CD8-positive, alpha-beta T cell (primary cell): ENCODE measurements at regions of chr6 and their contacts with region 1.

Region 1: GRCh38 chr6:112311950-112312547 is 35.1 kb upstream of the RFPL4B start:
- DNase-seq: peak in 3 of 9 experiments; percentile 5 to 50 (median 45)
- ATAC-seq: peak; percentile 52
- H3K4me3 ChIP-seq: no peak overlapping the region
- H3K4me3 Mint-ChIP-seq: no peak overlapping the region
- H3K27ac ChIP-seq: no peak overlapping the region
- H3K27ac Mint-ChIP-seq: no peak overlapping the region
- H3K4me1 ChIP-seq: no peaks in the 10 kb centered on the region
- H3K4me1 Mint-ChIP-seq: no peaks in the 10 kb centered on the region
- H3K27me3 ChIP-seq: no peaks in the 10 kb centered on the region
- H3K27me3 Mint-ChIP-seq: peaks cover 16% of the 10 kb centered on the region
- CTCF ChIP-seq: peak; percentile 69

Region 2: GRCh38 chr6:111011360-111012142 is 1300.5 kb before region 1 on chr6:
- CTCF ChIA-PET with region 1: no interaction called
- POLR2A ChIA-PET with region 1: no interaction called
- intact Hi-C with region 1: loop called in 1 of 2 experiments (anchors 5 kb)
- DNase-seq: peak in 2 of 9 experiments; percentile 45 to 62
- ATAC-seq: peak; percentile 69
- H3K4me3 ChIP-seq: no peak overlapping the region
- H3K4me3 Mint-ChIP-seq: no peak overlapping the region
- H3K27ac ChIP-seq: no peak overlapping the region
- H3K27ac Mint-ChIP-seq: no peak overlapping the region
- H3K4me1 ChIP-seq: no peaks in the 10 kb centered on the region
- H3K4me1 Mint-ChIP-seq: peaks cover 4% of the 10 kb centered on the region
- H3K27me3 ChIP-seq: no peaks in the 10 kb centered on the region
- H3K27me3 Mint-ChIP-seq: no peaks in the 10 kb centered on the region
- CTCF ChIP-seq: peak; percentile 71

Region 3: DNA sequence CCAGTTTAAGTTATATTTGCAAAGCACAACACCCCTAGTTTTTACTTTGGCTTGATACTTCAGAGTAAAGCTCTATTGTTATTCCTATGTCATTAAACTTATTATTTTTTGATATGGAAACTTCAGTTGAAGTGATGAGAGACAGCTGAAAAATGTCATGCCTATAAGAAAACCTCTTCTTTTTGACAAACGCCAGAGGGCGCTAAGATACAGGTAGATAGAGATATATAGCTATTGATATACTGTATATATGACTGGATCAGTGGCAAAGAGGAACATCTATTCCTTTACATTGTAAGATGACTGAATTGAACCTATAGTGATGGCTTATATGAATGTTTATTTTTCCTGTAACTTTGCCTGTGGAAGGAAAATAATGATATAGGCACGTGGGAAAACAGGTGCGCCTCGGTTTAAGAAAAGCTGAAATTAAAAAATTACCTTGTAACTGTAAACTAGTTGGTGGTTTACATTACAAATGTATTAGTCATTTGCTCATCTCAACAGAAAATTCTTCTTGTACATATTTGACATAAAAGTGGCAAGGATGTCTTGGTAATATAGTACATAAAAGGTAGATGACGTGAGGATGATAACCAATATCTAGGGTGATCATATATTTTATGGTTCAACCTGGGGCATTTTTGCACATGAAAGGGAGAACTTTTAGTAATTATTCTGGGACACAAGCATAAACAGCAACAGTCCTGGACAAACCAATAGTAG is 131.8 kb before region 1 on chr6:
- CTCF ChIA-PET with region 1: interaction called, 49 read pairs
- POLR2A ChIA-PET with region 1: interaction called, 5 read pairs
- intact Hi-C with region 1: loop called in 1 of 2 experiments (anchors 1 kb)
- DNase-seq: peak in 7 of 9 experiments; percentile 17 to 88 (median 52)
- ATAC-seq: peak; percentile 58
- H3K4me3 ChIP-seq: no peak overlapping the region
- H3K4me3 Mint-ChIP-seq: no peak overlapping the region
- H3K27ac ChIP-seq: no peak overlapping the region
- H3K27ac Mint-ChIP-seq: no peak overlapping the region
- H3K4me1 ChIP-seq: no peaks in the 10 kb centered on the region
- H3K4me1 Mint-ChIP-seq: no peaks in the 10 kb centered on the region
- H3K27me3 ChIP-seq: peaks cover 0 to 3% of the 10 kb centered on the region in 2 experiments
- H3K27me3 Mint-ChIP-seq: peaks cover 27% of the 10 kb centered on the region
- CTCF ChIP-seq: peak; percentile 84